Heart right ventricle (tissue), 16 donors: ENCODE measurements at regions of chr7 and their contacts with region 1.

Region 1: DNA sequence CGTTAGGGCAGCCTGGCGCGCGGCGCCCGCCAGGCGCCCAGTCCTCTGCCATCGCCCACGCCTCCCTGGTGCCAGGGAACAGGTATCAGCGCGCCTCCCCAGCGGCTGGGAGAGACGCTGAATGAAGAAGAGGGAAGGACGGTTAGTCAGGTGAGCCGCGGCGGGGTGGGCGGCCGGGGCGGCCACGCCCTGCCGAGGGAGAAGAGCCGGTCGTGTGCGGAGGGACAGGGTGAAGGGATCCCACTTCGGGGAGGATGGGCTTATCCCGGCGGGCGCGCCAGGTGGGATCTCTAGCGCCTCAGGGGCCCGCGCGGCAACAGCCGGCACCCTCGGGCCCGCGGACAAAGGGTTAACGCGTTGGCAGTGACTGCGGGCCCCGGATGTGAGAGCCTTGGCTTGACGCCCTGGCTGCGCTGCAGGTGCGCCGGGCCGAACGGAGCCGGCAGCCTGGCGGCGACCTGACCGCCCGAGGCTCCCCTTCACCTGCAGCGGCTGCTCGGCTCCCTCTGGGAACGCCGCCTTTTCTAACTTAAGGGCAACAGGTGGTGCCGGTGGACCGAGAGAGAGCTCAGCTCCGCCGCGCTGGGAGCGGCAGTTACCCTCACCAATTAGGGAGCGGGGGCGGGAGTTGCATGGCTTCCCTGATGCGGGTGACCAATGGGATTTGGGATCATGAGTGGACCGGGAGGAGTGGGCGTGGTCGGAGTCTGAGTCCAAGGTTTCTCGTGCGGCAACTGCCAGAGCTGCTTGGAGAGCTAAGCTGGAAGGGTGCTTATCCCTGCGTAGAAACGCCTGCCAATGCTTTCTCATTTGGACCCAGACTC is at the start of gene ARL4A:
- DNase-seq: peak; percentile 97 to 100
- ATAC-seq: peak; percentile 95 to 98 (median 98)
- H3K4me3 ChIP-seq: peak within 1 kb of the TSS; percentile 74 to 99 (median 90)
- H3K27ac ChIP-seq: peak within 1 kb of the TSS; percentile 51 to 92 (median 90)
- H3K4me1 ChIP-seq: peaks cover 0 to 44% (median 21%) of the 10 kb centered on the region in 9 donors
- H3K27me3 ChIP-seq: no peaks in the 10 kb centered on the region
- CTCF ChIP-seq: peak in 8 of 9 donors; percentile 27 to 72 (median 51)
- total RNA-seq, gene ARL4A: 6.9 to 21.4 (median 12.9) TPM

Region 2: GRCh38 chr7:12017046-12017445 is 670.1 kb before region 1 on chr7:
- intact Hi-C with region 1: no loop called
- DNase-seq: no peak
- ATAC-seq: no peak
- H3K4me3 ChIP-seq: no peak overlapping the region
- H3K27ac ChIP-seq: no peak overlapping the region
- H3K4me1 ChIP-seq: no peaks in the 10 kb centered on the region
- H3K27me3 ChIP-seq: no peaks in the 10 kb centered on the region
- CTCF ChIP-seq: no peak

Region 3: DNA sequence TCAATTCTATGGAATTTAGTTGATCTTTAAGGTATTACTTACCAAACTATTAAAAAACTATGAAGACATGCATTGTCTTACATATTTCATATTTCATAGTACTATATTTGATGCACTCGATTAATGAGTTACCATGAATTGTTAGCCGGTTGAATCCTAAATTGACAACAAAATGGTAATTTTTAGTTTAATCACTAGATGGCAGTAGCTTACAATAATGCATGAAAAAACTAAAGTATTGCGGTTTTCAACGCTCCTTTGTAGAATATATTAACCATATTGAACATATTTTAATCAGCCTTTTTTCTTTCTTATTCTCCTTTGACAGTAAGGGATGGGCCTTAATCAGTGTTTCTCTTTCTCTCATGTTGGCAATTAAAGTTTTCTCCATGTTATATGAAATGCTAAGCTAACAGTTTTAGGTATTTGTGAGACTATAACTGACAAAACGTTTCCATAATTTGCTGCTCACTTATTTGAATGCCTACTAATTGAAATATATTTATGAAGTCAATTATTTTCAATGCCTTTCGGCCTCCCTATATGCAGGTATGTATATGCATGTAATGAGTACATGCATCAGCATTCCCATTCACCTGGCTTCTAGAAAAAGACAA is 48.1 kb before region 1 on chr7:
- intact Hi-C with region 1: loop called in 2 of 10 experiments (anchors 5 kb)
- DNase-seq: no peak
- ATAC-seq: peak in 3 of 8 donors; percentile 41 to 52 (median 43)
- H3K4me3 ChIP-seq: no peak overlapping the region
- H3K27ac ChIP-seq: no peak overlapping the region
- H3K4me1 ChIP-seq: peaks cover 0 to 22% (median 0%) of the 10 kb centered on the region in 9 donors
- H3K27me3 ChIP-seq: peaks cover 0 to 5% (median 0%) of the 10 kb centered on the region in 7 donors
- CTCF ChIP-seq: peak; percentile 52 to 83 (median 66)

Region 4: DNA sequence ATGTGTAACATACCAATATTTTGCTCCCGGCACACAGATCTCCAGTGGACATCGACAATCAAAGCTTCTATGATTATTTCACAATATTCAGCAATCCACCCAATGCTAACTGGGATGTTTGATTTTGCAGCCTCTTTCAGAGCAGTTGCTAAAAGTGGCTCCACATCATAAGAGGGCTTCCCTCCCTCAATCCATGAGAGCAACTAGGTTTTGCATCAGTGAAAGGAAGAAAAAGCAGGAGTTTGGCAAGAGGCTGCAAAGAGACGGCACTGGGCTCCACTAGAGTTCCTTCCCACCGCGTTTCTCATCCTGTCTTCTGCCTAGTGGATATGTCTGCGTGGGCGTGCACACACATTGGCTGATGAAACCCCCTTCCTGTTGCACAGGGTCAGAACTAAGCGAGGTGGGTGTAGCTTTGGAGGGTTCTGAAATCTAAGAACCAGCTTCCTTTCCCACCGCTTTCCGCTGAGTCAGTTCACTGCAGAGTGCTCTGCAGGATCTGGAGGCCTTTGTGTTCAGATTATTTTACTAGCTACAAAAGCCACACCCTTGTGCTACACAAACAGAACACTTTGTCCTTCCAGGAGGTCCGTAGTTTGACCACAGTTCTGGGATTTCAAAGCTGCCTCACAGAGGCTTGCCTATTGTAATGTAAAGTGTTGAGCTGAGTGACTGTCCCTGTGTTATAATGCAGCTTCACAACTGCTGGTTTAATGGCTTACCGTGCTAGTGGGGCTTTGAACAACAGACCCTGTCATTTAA is 28.4 kb after region 1 on chr7:
- intact Hi-C with region 1: loop called in 1 of 10 experiments (anchors 2 kb)
- DNase-seq: peak; percentile 50 to 71
- ATAC-seq: peak; percentile 90 to 98 (median 94)
- H3K4me3 ChIP-seq: peak overlapping the region in 6 of 10 donors; percentile 16 to 40 (median 30)
- H3K27ac ChIP-seq: peak overlapping the region; percentile 51 to 91 (median 76)
- H3K4me1 ChIP-seq: peaks cover 3 to 59% (median 38%) of the 10 kb centered on the region in 9 donors
- H3K27me3 ChIP-seq: no peaks in the 10 kb centered on the region
- CTCF ChIP-seq: no peak

Region 5: GRCh38 chr7:12771378-12771877 is 84.3 kb after region 1 on chr7:
- intact Hi-C with region 1: loop called in 2 of 10 experiments (anchors 5 to 10 kb)
- DNase-seq: peak; percentile 12 to 44
- ATAC-seq: peak; percentile 77 to 94 (median 88)
- H3K4me3 ChIP-seq: peak overlapping the region in 5 of 10 donors; percentile 7 to 27 (median 14)
- H3K27ac ChIP-seq: peak overlapping the region in 9 of 10 donors; percentile 2 to 76 (median 47)
- H3K4me1 ChIP-seq: peaks cover 0 to 28% (median 22%) of the 10 kb centered on the region in 9 donors
- H3K27me3 ChIP-seq: no peaks in the 10 kb centered on the region
- CTCF ChIP-seq: no peak

Region 6: GRCh38 chr7:12827920-12828319 is 140.8 kb after region 1 on chr7:
- intact Hi-C with region 1: loop called in 4 of 10 experiments (anchors 2 to 10 kb)
- DNase-seq: no peak
- ATAC-seq: peak in 7 of 8 donors; percentile 18 to 85 (median 73)
- H3K4me3 ChIP-seq: no peak overlapping the region
- H3K27ac ChIP-seq: peak overlapping the region in 9 of 10 donors; percentile 59 to 75 (median 70)
- H3K4me1 ChIP-seq: peaks cover 0 to 6% (median 0%) of the 10 kb centered on the region in 9 donors
- H3K27me3 ChIP-seq: no peaks in the 10 kb centered on the region
- CTCF ChIP-seq: no peak

Region 7: DNA sequence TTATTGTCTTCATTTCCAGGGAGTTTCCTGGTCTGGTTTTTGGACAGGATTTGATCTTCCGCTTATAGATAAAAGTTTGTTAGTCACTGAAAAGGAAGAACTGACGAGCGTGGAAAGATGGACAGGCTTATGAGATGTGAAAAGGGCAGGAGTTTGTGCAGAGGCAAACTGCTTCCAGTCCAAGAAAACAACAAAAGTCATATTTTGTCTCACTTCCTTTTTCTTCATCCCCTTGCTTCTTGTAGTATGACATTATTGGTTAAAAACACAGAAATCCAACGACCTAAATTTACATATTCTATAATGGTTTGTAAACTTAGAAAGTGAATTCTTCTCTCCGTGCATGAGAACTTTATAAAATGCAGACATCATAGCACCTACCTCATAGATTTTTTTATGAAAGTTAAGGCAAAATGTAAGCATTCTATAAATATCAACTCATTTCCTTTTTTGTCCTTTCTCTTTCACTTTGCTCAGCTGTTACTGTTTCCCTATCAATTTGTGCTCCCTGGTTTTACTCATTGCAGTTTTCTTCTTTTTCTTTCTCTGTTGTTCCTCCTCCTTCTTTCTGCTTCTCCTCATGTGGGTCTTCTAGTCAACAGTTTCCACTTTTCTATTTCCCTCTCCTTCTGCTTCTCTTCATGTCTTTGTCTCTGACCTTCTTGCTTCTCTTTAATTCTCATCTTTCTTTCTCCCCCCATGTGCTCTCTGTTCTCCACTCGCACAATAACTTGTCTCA is 370.5 kb after region 1 on chr7:
- intact Hi-C with region 1: loop called in 1 of 10 experiments (anchors 10 kb)
- DNase-seq: no peak
- ATAC-seq: peak in 4 of 8 donors; percentile 35 to 79 (median 50)
- H3K4me3 ChIP-seq: peak overlapping the region in 5 of 10 donors; percentile 18 to 46 (median 26)
- H3K27ac ChIP-seq: peak overlapping the region in 4 of 10 donors; percentile 26 to 83 (median 40)
- H3K4me1 ChIP-seq: peaks cover 0 to 31% (median 5%) of the 10 kb centered on the region in 9 donors
- H3K27me3 ChIP-seq: no peaks in the 10 kb centered on the region
- CTCF ChIP-seq: no peak

Region 8: DNA sequence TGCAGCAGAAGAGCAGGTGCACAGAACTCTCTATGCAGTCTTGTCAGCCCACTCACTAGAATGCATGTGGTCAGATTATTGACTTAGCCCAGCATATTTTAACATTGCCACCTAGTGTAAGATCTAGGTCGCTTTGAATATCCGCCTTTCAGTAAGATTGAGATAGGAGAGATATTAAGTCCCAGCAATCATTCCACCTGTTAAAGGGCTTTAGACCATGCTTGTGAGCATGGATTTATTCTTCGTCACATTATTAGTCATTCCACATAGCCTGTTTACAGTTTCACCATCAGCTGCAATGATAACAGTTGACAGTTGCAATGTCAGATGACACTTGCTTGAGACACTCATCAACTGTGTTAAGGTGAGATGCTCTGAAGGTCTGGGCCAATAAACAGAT is 492.0 kb after region 1 on chr7:
- intact Hi-C with region 1: loop called in 6 of 10 experiments (anchors 2 to 10 kb)
- DNase-seq: no peak
- ATAC-seq: peak in 7 of 8 donors; percentile 34 to 64 (median 52)
- H3K4me3 ChIP-seq: no peak overlapping the region
- H3K27ac ChIP-seq: no peak overlapping the region
- H3K4me1 ChIP-seq: peaks cover 0 to 8% (median 0%) of the 10 kb centered on the region in 9 donors
- H3K27me3 ChIP-seq: no peaks in the 10 kb centered on the region
- CTCF ChIP-seq: peak in 7 of 9 donors; percentile 26 to 55 (median 38)